ENCODE measurements at regions of chr1 and their contacts with region 1.

Region 1: DNA sequence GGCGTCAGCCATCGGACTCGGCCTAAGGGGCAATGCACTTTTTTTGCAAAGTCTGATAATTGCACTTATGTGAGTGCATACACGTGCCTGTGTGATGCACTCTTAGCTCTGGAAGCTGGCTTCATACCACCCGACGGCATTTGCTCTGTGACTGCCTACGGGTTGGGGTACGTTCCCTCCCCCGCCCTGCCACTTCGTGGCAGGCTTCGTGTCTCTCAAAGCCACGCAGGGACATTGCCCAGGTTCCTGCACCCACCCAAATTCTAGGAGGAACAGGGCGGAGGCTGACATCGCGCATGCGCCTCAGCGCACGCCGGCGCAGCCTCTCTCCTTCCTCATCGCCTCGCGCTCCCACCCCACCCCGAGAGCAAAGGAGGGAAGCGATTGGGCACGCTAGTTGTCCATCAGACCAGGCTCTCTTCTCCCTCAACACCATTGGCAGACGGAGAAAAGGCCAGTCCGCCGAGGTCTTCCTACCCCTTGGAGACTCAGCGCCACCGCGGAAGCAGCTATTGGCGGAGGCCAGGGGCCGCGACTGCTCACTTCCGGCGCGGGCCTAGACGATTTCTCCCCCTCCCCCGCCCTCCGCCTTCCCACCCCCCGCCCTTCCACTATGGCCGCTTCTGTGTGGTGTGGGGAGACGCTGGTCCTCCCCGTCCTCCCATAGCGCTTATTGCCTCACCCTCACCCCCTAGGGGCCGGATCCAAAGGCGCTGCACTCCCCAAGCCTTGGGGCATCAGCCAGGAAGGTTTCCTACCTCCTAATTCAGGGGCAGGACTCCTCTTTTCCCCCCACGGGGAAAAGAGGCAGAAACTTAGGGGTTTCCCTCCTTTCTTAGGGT is at the start of gene INTS3:
- DNase-seq: peak; percentile 100
- ATAC-seq: peak; percentile 97
- H3K4me3 ChIP-seq: peak within 1 kb of the TSS; percentile 95
- H3K27ac ChIP-seq: peak within 1 kb of the TSS; percentile 85
- H3K4me1 ChIP-seq: peaks cover 33% of the 10 kb centered on the region
- H3K27me3 ChIP-seq: no peaks in the 10 kb centered on the region
- CTCF ChIP-seq: no peak
- total RNA-seq, gene INTS3: 46.5 and 57.4 TPM in 2 replicates

Region 2: GRCh38 chr1:153494976-153495535 is 232.6 kb before region 1 on chr1:
- CTCF ChIA-PET with region 1: interaction called, 10 read pairs
- POLR2A ChIA-PET with region 1: no interaction called
- intact Hi-C with region 1: no loop called
- DNase-seq: peak; percentile 88
- ATAC-seq: peak; percentile 43
- H3K4me3 ChIP-seq: no peak overlapping the region
- H3K27ac ChIP-seq: no peak overlapping the region
- H3K4me1 ChIP-seq: peaks cover 18% of the 10 kb centered on the region
- H3K27me3 ChIP-seq: no peaks in the 10 kb centered on the region
- CTCF ChIP-seq: peak; percentile 98

Region 3: DNA sequence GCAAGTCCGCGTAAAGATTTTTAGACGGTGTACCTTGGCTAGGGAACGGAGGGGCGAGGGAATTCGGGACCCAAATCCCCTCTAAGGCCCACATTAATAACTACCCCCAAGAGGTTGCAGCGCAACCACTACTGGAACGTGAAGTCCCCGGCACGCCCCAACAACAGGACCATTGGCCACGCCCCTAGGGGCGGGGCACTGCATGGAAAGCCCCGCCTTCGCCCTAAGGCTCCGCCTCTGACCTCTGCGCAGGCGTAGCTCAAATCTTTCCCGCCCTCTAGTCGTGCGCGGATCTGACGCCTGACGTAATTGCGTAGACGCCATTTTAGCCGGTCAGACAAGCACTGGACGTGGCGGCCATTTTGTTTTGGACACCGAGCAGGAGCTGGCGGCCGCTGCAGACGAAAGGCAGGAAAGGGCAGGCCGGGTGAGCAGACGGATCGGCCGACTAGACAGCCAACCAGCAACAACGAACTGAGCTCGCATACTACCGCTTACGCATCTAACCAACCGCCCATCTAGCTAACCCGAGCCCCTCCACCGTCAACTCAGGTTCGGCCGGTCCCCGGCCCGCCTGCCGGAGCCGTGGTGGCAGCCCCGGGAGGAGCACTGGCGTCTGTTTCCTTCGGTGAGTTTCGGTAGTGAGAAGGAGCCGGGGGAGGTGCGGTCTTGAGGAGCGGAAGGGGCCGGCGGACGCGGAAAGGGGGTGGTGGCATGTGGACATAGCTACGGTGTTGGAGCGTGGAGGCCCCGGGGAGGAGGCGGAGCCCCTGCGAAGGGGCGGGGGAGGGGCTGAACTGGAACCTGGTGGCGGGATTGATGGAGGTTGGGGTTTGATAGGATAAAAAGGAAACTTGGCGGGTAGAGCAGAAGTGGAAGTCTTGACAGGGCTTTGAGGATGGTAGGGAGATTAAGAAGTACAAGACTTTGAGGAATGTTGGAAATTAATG is 93.7 kb before region 1 on chr1 and contains the start of gene CHTOP:
- CTCF ChIA-PET with region 1: no interaction called
- POLR2A ChIA-PET with region 1: interaction called, 20 read pairs
- intact Hi-C with region 1: no loop called
- DNase-seq: peak; percentile 100
- ATAC-seq: peak; percentile 88
- H3K4me3 ChIP-seq: peak within 1 kb of the TSS; percentile 83
- H3K27ac ChIP-seq: peak within 1 kb of the TSS; percentile 97
- H3K4me1 ChIP-seq: peaks cover 18% of the 10 kb centered on the region
- H3K27me3 ChIP-seq: no peaks in the 10 kb centered on the region
- CTCF ChIP-seq: no peak
- total RNA-seq, gene CHTOP: 101 and 112 TPM in 2 replicates

Region 4: GRCh38 chr1:153658400-153659174 is 69.1 kb before region 1 on chr1 and contains the start of gene SNAPIN:
- CTCF ChIA-PET with region 1: no interaction called
- POLR2A ChIA-PET with region 1: interaction called, 20 read pairs
- intact Hi-C with region 1: no loop called
- DNase-seq: peak; percentile 92
- ATAC-seq: peak; percentile 93
- H3K4me3 ChIP-seq: peak within 1 kb of the TSS; percentile 89
- H3K27ac ChIP-seq: peak within 1 kb of the TSS; percentile 62
- H3K4me1 ChIP-seq: peaks cover 14% of the 10 kb centered on the region; the same call in 1 of the 2 replicates
- H3K27me3 ChIP-seq: no peaks in the 10 kb centered on the region
- CTCF ChIP-seq: no peak; the same call in 1 of the 2 replicates
- total RNA-seq, gene SNAPIN: 46.4 and 82.0 TPM in 2 replicates

Region 5: DNA sequence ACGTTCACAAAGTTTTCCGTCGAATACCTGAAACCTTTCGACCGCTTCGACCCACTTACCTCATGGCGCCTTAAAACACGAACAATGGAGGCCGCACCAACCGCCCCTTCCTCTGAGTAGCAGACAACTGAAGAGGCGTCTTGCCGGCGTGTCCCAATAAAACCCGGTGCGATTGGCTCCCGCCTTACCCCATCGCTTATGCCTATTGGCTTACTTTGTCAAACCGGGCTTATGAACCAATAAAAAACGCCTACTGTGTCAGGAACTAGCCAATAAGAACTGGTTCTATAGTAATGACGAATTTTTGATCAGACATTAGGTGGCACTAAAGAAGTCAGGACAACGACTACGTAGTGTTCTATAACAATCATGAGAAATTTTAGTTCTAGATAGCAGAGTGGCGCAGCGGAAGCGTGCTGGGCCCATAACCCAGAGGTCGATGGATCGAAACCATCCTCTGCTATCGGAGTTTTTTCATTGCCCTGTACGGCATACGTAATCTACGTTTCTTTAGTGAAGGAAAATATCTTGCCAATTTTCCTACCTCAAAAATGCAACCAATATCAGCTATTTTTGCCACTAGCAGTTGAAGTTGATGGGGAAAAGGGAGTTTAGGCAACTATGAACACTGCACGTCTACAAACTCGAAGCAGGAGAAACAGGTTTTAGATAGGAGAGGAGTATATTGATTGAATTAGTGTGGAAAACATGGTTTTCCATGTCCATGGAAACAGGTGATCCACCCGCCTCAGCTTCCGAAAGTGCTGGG is 56.6 kb before region 1 on chr1 and contains the start of gene ILF2:
- CTCF ChIA-PET with region 1: no interaction called
- POLR2A ChIA-PET with region 1: interaction called, 18 read pairs
- intact Hi-C with region 1: no loop called
- DNase-seq: peak; percentile 100
- ATAC-seq: peak; percentile 87
- H3K4me3 ChIP-seq: peak within 1 kb of the TSS; percentile 89
- H3K27ac ChIP-seq: peak within 1 kb of the TSS; percentile 52
- H3K4me1 ChIP-seq: peaks cover 17% of the 10 kb centered on the region
- H3K27me3 ChIP-seq: no peaks in the 10 kb centered on the region
- CTCF ChIP-seq: peak; percentile 54
- total RNA-seq, gene ILF2: 398 and 439 TPM in 2 replicates

Region 6: DNA sequence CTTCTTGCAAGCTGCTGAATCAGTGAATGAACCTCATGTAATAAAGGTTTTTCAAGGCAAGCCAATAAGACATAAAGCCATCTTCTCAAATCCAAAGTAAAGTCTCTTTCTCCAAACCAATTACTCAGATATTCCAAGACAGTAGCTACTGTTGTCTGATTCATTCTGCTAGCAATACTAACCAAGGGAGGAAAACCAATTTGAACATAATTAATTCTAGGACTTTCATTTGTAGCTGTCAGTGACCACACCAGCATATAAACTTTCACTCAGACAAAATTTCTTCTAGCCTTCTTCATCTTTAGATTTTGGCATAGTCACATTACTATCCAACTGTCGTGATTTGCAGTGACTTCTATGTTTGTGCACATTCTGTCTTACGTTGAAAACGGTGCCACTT is 10.4 kb before region 1 on chr1:
- CTCF ChIA-PET with region 1: no interaction called
- POLR2A ChIA-PET with region 1: no interaction called
- intact Hi-C with region 1: no loop called
- DNase-seq: no peak
- ATAC-seq: no peak
- H3K4me3 ChIP-seq: no peak overlapping the region
- H3K27ac ChIP-seq: no peak overlapping the region
- H3K4me1 ChIP-seq: no peaks in the 10 kb centered on the region
- H3K27me3 ChIP-seq: no peaks in the 10 kb centered on the region
- CTCF ChIP-seq: no peak

Region 7: DNA sequence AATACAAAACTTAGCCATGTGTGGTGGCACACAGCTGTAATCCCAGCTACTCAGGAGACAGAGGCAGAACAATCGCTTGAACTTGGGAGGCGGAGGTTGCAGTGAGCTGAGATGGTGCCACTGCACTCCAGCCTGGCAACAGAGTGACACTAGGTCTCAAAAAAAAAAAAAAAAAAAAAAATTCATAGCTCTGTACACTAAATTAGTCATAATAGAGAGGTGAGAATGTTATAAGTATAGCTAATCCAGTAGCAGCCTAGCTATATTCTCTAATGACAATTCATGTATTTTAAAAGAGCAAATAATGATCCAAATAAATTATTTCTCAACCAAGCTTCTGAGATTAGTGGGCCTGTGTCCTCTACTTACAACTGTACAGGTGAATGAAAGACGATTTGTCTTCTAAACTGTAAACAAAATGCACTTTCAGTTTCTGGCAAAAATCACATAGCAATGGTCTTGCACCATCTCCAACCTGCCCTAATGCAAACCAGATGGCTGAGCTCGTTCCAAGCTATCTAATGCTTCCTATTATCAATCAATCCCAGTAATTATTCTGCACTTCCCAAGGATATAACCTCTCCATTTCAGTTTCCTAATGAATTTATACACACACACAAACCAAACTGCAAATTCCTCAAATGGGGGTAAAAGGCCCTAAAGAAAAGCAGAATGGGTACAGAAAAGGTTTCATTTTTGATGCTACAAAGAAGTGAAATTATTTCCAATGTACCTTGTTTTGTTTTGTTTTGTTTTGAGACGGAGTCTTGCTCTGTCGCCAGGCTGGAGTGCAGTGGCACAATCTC is 138.6 kb after region 1 on chr1:
- CTCF ChIA-PET with region 1: interaction called, 4 read pairs
- POLR2A ChIA-PET with region 1: interaction called, 32 read pairs
- intact Hi-C with region 1: no loop called
- DNase-seq: no peak
- ATAC-seq: no peak
- H3K4me3 ChIP-seq: no peak overlapping the region
- H3K27ac ChIP-seq: no peak overlapping the region
- H3K4me1 ChIP-seq: no peaks in the 10 kb centered on the region
- H3K27me3 ChIP-seq: no peaks in the 10 kb centered on the region
- CTCF ChIP-seq: no peak

Region 8: DNA sequence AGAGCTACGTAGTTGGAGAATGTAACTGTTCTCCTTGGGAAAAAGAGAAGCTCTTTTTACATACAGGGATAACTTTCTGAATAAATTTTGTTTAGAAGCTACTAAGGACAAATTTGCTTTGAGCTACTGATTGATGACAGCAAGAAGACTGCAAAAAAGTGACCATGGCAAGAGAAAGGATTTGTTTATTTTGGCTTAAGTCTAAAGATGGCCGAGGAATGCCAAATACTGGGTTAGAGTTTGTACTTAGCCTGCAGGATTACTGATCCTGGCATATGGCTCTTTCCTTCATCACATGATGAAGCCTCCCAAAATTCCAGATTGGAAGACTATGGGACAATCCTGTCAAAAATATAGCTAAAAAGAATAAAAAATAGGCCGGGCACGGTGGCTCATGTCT is 291.6 kb after region 1 on chr1:
- CTCF ChIA-PET with region 1: no interaction called
- POLR2A ChIA-PET with region 1: no interaction called
- intact Hi-C with region 1: no loop called
- DNase-seq: no peak
- ATAC-seq: no peak
- H3K4me3 ChIP-seq: no peak overlapping the region
- H3K27ac ChIP-seq: no peak overlapping the region
- H3K4me1 ChIP-seq: 0 out of 2 replicates have a peak, but pooled peaks cover 3% of the 10 kb centered on the region
- H3K27me3 ChIP-seq: no peaks in the 10 kb centered on the region
- CTCF ChIP-seq: no peak